ENCODE measurements at regions of chr1 and their contacts with region 1.

Region 1: DNA sequence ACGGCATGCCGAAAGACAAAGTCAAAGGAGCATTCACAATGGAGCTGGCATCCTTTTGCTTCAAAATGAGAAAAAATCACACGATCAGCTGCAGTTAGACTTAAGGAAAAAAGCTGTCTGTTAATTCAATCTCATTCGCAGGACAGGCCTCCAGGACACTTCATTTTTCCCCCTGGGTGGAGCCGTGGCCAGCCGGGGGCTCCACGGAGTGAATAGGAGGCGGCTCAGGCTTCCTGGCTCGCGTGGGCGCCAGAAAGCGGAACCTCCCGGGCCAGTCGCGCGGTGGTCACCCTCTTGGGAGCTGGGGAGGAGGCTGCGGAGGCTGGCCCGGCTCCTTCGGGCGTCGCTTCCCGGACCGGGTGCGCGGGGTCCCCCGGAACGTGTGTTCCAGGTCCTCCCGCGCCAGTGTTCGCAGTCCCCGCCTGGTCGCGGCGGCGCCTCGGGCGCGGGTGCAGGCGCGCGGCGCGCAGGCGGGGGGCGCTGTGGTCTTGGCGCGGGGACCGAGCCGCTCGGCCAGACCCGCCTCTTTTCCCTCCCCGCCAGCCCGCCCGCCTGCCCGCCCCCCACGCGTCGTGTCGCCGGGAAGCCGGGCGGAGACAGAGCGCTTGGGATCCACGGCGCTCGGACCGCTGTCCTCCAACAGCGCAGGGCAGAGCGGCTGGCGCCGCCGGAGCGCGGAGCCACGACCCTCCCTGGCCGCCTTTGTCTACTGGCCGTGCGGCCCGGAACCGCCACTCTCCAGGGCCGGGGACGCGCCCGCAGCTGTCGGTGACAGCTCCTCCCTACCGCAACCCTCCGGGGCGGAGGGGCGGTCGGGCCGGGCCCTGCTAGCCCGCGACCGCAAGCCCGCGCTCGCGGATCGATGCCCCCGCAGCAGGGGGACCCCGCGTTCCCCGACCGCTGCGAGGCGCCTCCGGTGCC is at the start of gene RHOU:
- DNase-seq: peak; percentile 95
- H3K4me3 ChIP-seq: peak within 1 kb of the TSS; percentile 74 to 76
- H3K27ac ChIP-seq: peak within 1 kb of the TSS in 1 of 2 experiments; percentile 77; a peak in 2 of 4 replicates
- H3K4me1 ChIP-seq: peaks cover 0 to 14% of the 10 kb centered on the region in 2 experiments; a peak in 2 of 4 replicates
- H3K27me3 ChIP-seq: peaks cover 8% of the 10 kb centered on the region; the same call in 1 of the 2 replicates
- CTCF ChIP-seq: peak; percentile 54
- EP300 ChIP-seq: no peak
- RAD21 ChIP-seq: peak; percentile 63
- polyA plus RNA-seq, gene RHOU: 0.36 and 0.44 TPM in 2 replicates

Region 2: GRCh38 chr1:228664399-228664914 is 70.7 kb before region 1 on chr1:
- CTCF ChIA-PET with region 1: interaction called, 16 read pairs
- POLR2A ChIA-PET with region 1: no interaction called
- DNase-seq: peak; percentile 72
- H3K4me3 ChIP-seq: no peak overlapping the region
- H3K27ac ChIP-seq: no peak overlapping the region
- H3K4me1 ChIP-seq: no peaks in the 10 kb centered on the region
- H3K27me3 ChIP-seq: no peaks in the 10 kb centered on the region
- CTCF ChIP-seq: peak; percentile 94
- EP300 ChIP-seq: no peak
- RAD21 ChIP-seq: peak; percentile 95

Region 3: GRCh38 chr1:228758447-228758846 is 23.3 kb after region 1 on chr1:
- CTCF ChIA-PET with region 1: interaction called, 10 read pairs
- POLR2A ChIA-PET with region 1: no interaction called
- DNase-seq: no peak
- H3K4me3 ChIP-seq: no peak overlapping the region
- H3K27ac ChIP-seq: no peak overlapping the region
- H3K4me1 ChIP-seq: no peaks in the 10 kb centered on the region; a peak in 1 of 4 replicates
- H3K27me3 ChIP-seq: peaks cover 14% of the 10 kb centered on the region; the same call in 1 of the 2 replicates
- CTCF ChIP-seq: no peak
- EP300 ChIP-seq: no peak
- RAD21 ChIP-seq: no peak

Region 4: DNA sequence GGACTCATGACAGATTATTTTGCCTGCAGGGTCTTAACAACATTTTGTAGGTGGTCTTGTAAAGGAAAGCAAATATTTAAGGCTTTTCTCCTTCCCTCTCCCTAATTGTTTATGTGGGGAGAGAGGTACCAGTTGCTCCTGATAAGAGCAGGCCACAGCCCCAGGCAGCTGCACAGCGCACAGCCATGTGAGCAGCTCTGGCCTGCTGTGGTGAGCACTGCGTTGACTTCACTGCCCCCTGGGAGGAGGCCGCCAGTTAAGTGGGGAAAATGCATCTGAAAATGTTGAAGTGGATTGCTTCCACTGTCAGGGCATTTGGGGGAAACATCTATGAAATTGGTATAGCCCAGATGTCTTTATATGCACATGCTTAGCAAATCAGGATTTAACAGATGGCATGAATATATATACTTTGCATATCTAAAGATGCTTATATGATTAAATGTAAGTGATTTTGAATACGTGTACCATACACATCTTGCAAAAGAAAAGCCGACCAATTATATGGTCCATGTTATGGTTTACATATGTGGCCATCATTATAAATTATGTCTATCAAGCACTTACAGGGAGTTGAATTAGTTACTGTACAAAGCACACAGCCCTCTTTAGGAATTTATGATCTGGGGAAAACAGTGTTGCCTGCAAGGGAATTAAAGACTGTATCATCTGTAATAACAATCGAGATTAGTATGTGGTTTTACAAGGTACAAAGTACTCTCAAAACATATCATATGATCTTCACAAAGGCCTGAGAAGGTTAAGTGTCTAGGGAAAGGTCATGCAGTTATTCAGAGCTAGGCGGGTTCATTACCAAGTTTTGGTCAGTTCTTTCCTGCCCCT is 132.2 kb after region 1 on chr1:
- CTCF ChIA-PET with region 1: interaction called, 23 read pairs
- POLR2A ChIA-PET with region 1: interaction called, 3 read pairs
- DNase-seq: peak; percentile 80
- H3K4me3 ChIP-seq: no peak overlapping the region
- H3K27ac ChIP-seq: peak overlapping the region in 1 of 2 experiments; percentile 94; a peak in 2 of 4 replicates
- H3K4me1 ChIP-seq: peaks cover 0 to 74% of the 10 kb centered on the region in 2 experiments; a peak in 2 of 4 replicates
- H3K27me3 ChIP-seq: no peaks in the 10 kb centered on the region
- CTCF ChIP-seq: no peak
- EP300 ChIP-seq: peak in 1 of 2 experiments; percentile 73; a peak in 2 of 4 replicates
- RAD21 ChIP-seq: peak; percentile 58

Region 5: GRCh38 chr1:228913626-228914414 is 178.7 kb after region 1 on chr1:
- CTCF ChIA-PET with region 1: interaction called, 10 read pairs
- POLR2A ChIA-PET with region 1: no interaction called
- DNase-seq: no peak
- H3K4me3 ChIP-seq: no peak overlapping the region
- H3K27ac ChIP-seq: no peak overlapping the region
- H3K4me1 ChIP-seq: peaks cover 0 to 2% of the 10 kb centered on the region in 2 experiments; a peak in 1 of 4 replicates
- H3K27me3 ChIP-seq: no peaks in the 10 kb centered on the region; the same call in 1 of the 2 replicates
- CTCF ChIP-seq: no peak
- EP300 ChIP-seq: no peak
- RAD21 ChIP-seq: no peak

Region 6: GRCh38 chr1:229156872-229157271 is 421.7 kb after region 1 on chr1:
- CTCF ChIA-PET with region 1: interaction called, 18 read pairs
- POLR2A ChIA-PET with region 1: no interaction called
- DNase-seq: peak; percentile 49
- H3K4me3 ChIP-seq: no peak overlapping the region
- H3K27ac ChIP-seq: no peak overlapping the region
- H3K4me1 ChIP-seq: no peaks in the 10 kb centered on the region; a peak in 1 of 4 replicates
- H3K27me3 ChIP-seq: no peaks in the 10 kb centered on the region
- CTCF ChIP-seq: peak; percentile 46
- EP300 ChIP-seq: no peak
- RAD21 ChIP-seq: peak; percentile 76

Measured in SK-N-SH (cell line).